HEK293T (cell line): ENCODE measurements at regions of chr15 and their contacts with region 1.

Region 1: GRCh38 chr15:68672781-68673205 is 94.0 kb downstream of the CORO2B start:
- DNase-seq: no peak

Region 2: GRCh38 chr15:68559345-68560310 is 113.2 kb before region 1 on chr15:
- CTCF ChIA-PET with region 1: interaction called, 29 read pairs
- POLR2A ChIA-PET with region 1: interaction called, 3 read pairs
- DNase-seq: peak; percentile 90

Region 3: DNA sequence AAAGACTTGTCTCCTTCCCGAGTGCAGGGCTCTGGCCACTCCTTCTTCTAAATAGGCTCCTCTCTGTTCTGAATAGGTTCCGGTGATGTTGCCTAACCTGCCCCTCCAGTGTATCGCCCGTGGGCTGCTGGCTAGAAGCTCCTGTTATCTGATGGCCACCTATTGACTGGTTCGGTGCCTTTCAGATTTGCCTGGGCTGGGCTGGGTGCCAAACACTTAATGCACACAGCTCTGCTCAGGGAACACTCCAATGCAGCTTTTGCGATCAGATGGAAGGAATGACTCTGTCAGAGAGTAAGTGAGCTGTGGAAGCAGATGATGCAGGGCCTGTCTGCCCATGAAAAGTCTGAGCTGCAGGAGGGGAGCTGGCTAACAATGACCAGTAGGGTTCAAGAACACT is 18.9 kb after region 1 on chr15:
- CTCF ChIA-PET with region 1: interaction called, 10 read pairs
- POLR2A ChIA-PET with region 1: no interaction called
- DNase-seq: no peak

Region 4: GRCh38 chr15:68924866-68925560 is 252.2 kb after region 1 on chr15:
- CTCF ChIA-PET with region 1: interaction called, 13 read pairs
- POLR2A ChIA-PET with region 1: no interaction called
- DNase-seq: peak; percentile 87